ENCODE measurements at regions of chr9 and their contacts with region 1.

Region 1: DNA sequence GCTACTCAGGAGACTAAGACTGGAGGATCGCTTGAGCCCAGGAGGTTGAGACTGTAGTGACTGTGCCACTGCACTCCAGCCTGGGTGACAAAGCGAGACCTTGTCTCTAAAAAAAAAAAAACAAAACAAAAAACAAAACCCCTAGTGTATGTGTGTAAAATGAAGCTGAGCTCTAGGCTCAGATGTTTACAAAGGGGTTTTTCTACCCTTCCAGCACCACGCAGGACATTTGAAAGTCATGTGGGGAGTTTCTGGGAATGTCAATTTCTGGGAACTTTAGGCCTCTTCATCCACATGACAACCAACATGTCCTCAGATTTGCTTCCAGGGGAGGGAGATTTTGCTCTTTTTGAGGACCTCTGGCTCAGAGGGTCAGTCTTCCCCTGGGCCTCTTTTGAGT is 42.4 kb upstream of the AIF1L start:
- DNase-seq: no peak
- ATAC-seq: no peak
- H3K4me3 ChIP-seq: no peak overlapping the region
- H3K27ac ChIP-seq: no peak overlapping the region
- H3K4me1 ChIP-seq: peaks cover 0 to 6% (median 0%) of the 10 kb centered on the region in 12 donors
- H3K27me3 ChIP-seq: peaks cover 0 to 10% (median 0%) of the 10 kb centered on the region in 9 donors
- CTCF ChIP-seq: no peak
- POLR2A ChIP-seq: no peak

Region 2: DNA sequence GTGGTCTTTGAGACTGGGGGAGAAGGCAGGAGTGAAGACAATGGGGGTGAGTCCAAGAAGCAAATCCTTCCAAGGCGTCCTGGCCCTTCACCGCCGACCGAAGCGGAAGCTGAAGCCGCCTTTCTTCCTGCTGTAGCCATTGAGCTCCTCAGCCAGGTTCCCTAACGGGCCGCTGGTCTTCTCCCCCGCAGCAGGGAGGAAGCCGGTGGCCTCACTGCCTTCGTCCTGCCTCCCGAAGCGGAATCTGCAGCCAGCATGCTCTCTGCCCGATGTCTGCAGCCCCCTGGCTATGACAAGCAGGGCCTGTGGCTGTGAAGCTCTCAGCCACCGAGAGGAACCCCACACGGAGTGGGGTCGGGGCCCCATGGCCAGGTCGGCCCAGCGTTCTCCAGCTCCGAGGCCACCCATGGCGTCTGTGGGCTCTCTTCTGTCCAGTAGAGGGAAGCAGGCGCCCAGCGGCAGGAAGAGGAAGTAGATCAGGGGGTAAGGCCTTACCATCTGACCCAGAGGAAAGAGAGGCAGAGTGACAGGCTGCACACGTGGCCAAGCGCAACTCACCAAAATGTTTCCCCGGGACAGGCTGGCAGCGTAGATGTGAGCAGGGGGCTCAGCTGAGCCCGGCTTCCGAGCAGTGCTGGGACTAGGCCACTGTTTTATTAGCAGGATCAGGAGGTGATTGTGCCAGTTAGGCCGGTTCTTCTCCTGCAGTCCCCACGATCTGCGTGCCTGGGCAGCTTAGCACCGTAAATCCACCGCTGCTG is 160.4 kb before region 1 on chr9:
- intact Hi-C with region 1: no loop called
- DNase-seq: peak; percentile 55 to 85 (median 63)
- ATAC-seq: peak; percentile 25 to 80 (median 38)
- H3K4me3 ChIP-seq: peak overlapping the region in 6 of 12 donors; percentile 25 to 48 (median 29)
- H3K27ac ChIP-seq: peak overlapping the region in 8 of 12 donors; percentile 8 to 85 (median 28)
- H3K4me1 ChIP-seq: peaks cover 0 to 35% (median 17%) of the 10 kb centered on the region in 12 donors
- H3K27me3 ChIP-seq: no peaks in the 10 kb centered on the region
- CTCF ChIP-seq: peak in 10 of 12 donors; percentile 17 to 51 (median 32)
- POLR2A ChIP-seq: no peak

Region 3: DNA sequence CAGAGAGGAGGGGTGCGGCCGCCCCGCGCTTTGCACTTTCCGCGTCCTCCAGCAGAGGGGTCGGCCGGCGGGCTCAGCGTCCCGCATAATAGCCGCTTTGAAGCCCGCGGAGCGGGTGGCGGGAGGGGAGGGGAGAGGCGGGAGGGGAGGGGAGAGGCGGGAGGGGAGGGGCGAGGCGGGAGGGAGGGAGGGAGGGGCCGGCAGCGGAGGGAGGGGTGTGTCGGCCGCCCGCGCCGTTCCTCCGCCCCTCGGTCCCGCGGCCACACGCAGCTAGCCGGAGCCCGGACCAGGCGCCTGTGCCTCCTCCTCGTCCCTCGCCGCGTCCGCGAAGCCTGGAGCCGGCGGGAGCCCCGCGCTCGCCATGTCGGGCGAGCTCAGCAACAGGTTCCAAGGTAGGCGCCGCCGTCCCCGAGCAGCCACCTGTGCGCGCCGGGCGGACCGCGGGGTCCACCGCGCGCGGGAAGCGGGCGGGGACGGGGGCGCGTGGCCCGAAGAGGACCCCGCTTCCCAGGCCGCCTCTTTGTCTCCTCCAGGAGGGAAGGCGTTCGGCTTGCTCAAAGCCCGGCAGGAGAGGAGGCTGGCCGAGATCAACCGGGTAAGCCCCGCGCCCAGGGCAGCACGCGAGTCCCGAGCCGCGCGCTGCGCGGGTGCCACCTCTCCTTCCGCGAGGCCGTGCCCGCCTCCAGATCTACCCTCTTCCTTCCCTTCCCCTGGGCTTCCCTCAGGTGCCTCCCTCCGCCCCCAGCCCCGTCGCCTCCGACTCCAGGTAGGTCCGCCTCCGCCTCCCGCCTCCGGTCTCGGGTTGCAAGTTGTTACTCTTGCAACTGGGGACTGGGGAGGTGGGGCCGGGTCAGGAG is 42.6 kb after region 1 on chr9 and contains the start of gene AIF1L:
- intact Hi-C with region 1: loop called in 3 of 10 experiments (anchors 2 to 5 kb)
- DNase-seq: peak; percentile 45 to 70 (median 61)
- ATAC-seq: peak in 3 of 4 donors; percentile 24 to 46 (median 28)
- H3K4me3 ChIP-seq: peak within 1 kb of the TSS; percentile 60 to 89 (median 69)
- H3K27ac ChIP-seq: peak within 1 kb of the TSS; percentile 32 to 88 (median 80)
- H3K4me1 ChIP-seq: peaks cover 0 to 49% (median 22%) of the 10 kb centered on the region in 12 donors
- H3K27me3 ChIP-seq: peaks cover 0 to 42% (median 10%) of the 10 kb centered on the region in 9 donors
- CTCF ChIP-seq: peak in 4 of 12 donors; percentile 16 to 41 (median 22)
- POLR2A ChIP-seq: peak in 1 of 2 donors; percentile 62
- total RNA-seq, gene AIF1L: 12.1 to 93.8 (median 23.7) TPM

Region 4: GRCh38 chr9:131125128-131126058 is 71.5 kb after region 1 on chr9 and contains the start of gene NUP214:
- intact Hi-C with region 1: loop called in 6 of 10 experiments (anchors 2 to 10 kb)
- DNase-seq: peak; percentile 99 to 100 (median 99)
- ATAC-seq: peak; percentile 99 to 100 (median 99)
- H3K4me3 ChIP-seq: peak within 1 kb of the TSS; percentile 55 to 99 (median 87)
- H3K27ac ChIP-seq: peak within 1 kb of the TSS; percentile 59 to 91 (median 80)
- H3K4me1 ChIP-seq: peaks cover 0 to 22% (median 15%) of the 10 kb centered on the region in 12 donors
- H3K27me3 ChIP-seq: no peaks in the 10 kb centered on the region
- CTCF ChIP-seq: no peak
- POLR2A ChIP-seq: peak in 1 of 2 donors; percentile 85
- total RNA-seq, gene NUP214: 19.2 to 45.1 (median 25.7) TPM

Region 5: GRCh38 chr9:131178382-131178781 is 124.5 kb after region 1 on chr9:
- intact Hi-C with region 1: loop called in 1 of 10 experiments (anchors 2 kb)
- DNase-seq: peak; percentile 64 to 83 (median 69)
- ATAC-seq: peak; percentile 82 to 96 (median 94)
- H3K4me3 ChIP-seq: no peak overlapping the region
- H3K27ac ChIP-seq: peak overlapping the region in 1 of 12 donors; percentile 31
- H3K4me1 ChIP-seq: peaks cover 0 to 29% (median 6%) of the 10 kb centered on the region in 12 donors
- H3K27me3 ChIP-seq: no peaks in the 10 kb centered on the region
- CTCF ChIP-seq: peak; percentile 87 to 96 (median 93)
- POLR2A ChIP-seq: no peak

Measured in heart left ventricle (tissue), 16 donors.